ENCODE measurements at regions of chr17 and their contacts with region 1.

Region 1: GRCh38 chr17:63697341-63698286 is 2.3 kb downstream of the LIMD2 start:
- DNase-seq: peak; percentile 90
- H3K4me3 Mint-ChIP-seq: peak overlapping the region; percentile 88
- H3K27ac Mint-ChIP-seq: peak overlapping the region; percentile 96
- H3K4me1 Mint-ChIP-seq: peaks cover 53% of the 10 kb centered on the region
- H3K27me3 Mint-ChIP-seq: no peaks in the 10 kb centered on the region

Region 2: GRCh38 chr17:63445979-63446691 is 251.5 kb before region 1 on chr17 and contains the start of gene CYB561:
- CTCF ChIA-PET with region 1: interaction called, 3 read pairs
- POLR2A ChIA-PET with region 1: interaction called, 4 read pairs
- intact Hi-C with region 1: loop called (anchors 5 kb)
- DNase-seq: peak; percentile 81
- H3K4me3 Mint-ChIP-seq: peak within 1 kb of the TSS; percentile 70
- H3K27ac Mint-ChIP-seq: peak within 1 kb of the TSS; percentile 89
- H3K4me1 Mint-ChIP-seq: peaks cover 38% of the 10 kb centered on the region
- H3K27me3 Mint-ChIP-seq: peaks cover 1% of the 10 kb centered on the region
- total RNA-seq, gene CYB561: 9.4 to 9.7 TPM

Region 3: GRCh38 chr17:63512896-63513644 is 184.5 kb before region 1 on chr17:
- CTCF ChIA-PET with region 1: no interaction called
- POLR2A ChIA-PET with region 1: no interaction called
- intact Hi-C with region 1: no loop called
- DNase-seq: no peak
- H3K4me3 Mint-ChIP-seq: no peak overlapping the region
- H3K27ac Mint-ChIP-seq: no peak overlapping the region
- H3K4me1 Mint-ChIP-seq: peaks cover 18% of the 10 kb centered on the region
- H3K27me3 Mint-ChIP-seq: peaks cover 5% of the 10 kb centered on the region

Region 4: GRCh38 chr17:63621766-63622519 is 75.7 kb before region 1 on chr17 and contains the start of gene MAP3K3:
- CTCF ChIA-PET with region 1: interaction called, 7 read pairs
- POLR2A ChIA-PET with region 1: interaction called, 9 read pairs
- intact Hi-C with region 1: loop called (anchors 1 kb)
- DNase-seq: peak; percentile 99
- H3K4me3 Mint-ChIP-seq: peak within 1 kb of the TSS; percentile 99
- H3K27ac Mint-ChIP-seq: peak within 1 kb of the TSS; percentile 87
- H3K4me1 Mint-ChIP-seq: peaks cover 38% of the 10 kb centered on the region
- H3K27me3 Mint-ChIP-seq: no peaks in the 10 kb centered on the region
- total RNA-seq, gene MAP3K3: 32.8 to 34.0 TPM

Region 5: DNA sequence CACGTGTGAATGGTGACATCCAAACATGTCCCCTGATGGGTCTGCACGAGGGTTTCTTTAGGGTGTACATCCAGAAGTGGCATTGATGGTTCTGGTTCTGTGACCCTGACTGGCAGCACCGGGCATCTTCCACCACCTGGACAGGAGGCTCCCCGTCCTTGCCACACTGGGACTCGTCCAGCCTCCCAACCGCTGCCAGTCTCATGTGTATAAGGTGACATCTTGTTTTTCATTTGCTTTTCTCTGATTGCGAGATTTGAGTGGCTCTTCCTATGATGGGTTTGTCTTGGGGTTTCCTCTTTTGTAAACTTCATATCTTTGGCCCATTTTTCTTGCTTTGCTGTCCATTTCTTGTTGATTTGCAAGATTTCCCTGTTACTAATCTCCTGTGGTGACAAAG is 11.5 kb after region 1 on chr17:
- CTCF ChIA-PET with region 1: interaction called, 27 read pairs
- POLR2A ChIA-PET with region 1: interaction called, 3 read pairs
- intact Hi-C with region 1: loop called (anchors 1 kb)
- DNase-seq: no peak
- H3K4me3 Mint-ChIP-seq: no peak overlapping the region
- H3K27ac Mint-ChIP-seq: peak overlapping the region; percentile 49
- H3K4me1 Mint-ChIP-seq: peaks cover 54% of the 10 kb centered on the region
- H3K27me3 Mint-ChIP-seq: no peaks in the 10 kb centered on the region

Region 6: GRCh38 chr17:63741221-63742049 is 43.8 kb after region 1 on chr17 and contains the start of gene STRADA:
- CTCF ChIA-PET with region 1: interaction called, 9 read pairs
- POLR2A ChIA-PET with region 1: interaction called, 12 read pairs
- intact Hi-C with region 1: loop called (anchors 1 kb)
- DNase-seq: peak; percentile 100
- H3K4me3 Mint-ChIP-seq: peak within 1 kb of the TSS; percentile 91
- H3K27ac Mint-ChIP-seq: peak within 1 kb of the TSS; percentile 98
- H3K4me1 Mint-ChIP-seq: peaks cover 23% of the 10 kb centered on the region
- H3K27me3 Mint-ChIP-seq: no peaks in the 10 kb centered on the region
- total RNA-seq, gene STRADA: 64.8 to 69.7 TPM

Region 7: GRCh38 chr17:63827002-63827771 is 129.6 kb after region 1 on chr17 and contains the starts of genes FTSJ3 and PSMC5:
- CTCF ChIA-PET with region 1: no interaction called
- POLR2A ChIA-PET with region 1: interaction called, 4 read pairs
- intact Hi-C with region 1: loop called (anchors 1 kb)
- DNase-seq: peak; percentile 97
- H3K4me3 Mint-ChIP-seq: peak within 1 kb of the TSS; percentile 94
- H3K27ac Mint-ChIP-seq: peak within 1 kb of the TSS; percentile 98
- H3K4me1 Mint-ChIP-seq: peaks cover 75% of the 10 kb centered on the region
- H3K27me3 Mint-ChIP-seq: no peaks in the 10 kb centered on the region
- total RNA-seq, gene FTSJ3: 41.5 to 42.8 TPM
- total RNA-seq, gene PSMC5: 165 to 171 TPM